ENCODE measurements at regions of chr11 and their contacts with region 1.

Region 1: GRCh38 chr11:4496557-4497275 is 14.3 kb downstream of the OR52K1 start:
- DNase-seq: no peak
- H3K4me3 ChIP-seq: no peak overlapping the region
- H3K27ac ChIP-seq: no peak overlapping the region
- H3K4me1 ChIP-seq: no peaks in the 10 kb centered on the region
- H3K27me3 ChIP-seq: no peaks in the 10 kb centered on the region
- CTCF ChIP-seq: no peak

Region 2: DNA sequence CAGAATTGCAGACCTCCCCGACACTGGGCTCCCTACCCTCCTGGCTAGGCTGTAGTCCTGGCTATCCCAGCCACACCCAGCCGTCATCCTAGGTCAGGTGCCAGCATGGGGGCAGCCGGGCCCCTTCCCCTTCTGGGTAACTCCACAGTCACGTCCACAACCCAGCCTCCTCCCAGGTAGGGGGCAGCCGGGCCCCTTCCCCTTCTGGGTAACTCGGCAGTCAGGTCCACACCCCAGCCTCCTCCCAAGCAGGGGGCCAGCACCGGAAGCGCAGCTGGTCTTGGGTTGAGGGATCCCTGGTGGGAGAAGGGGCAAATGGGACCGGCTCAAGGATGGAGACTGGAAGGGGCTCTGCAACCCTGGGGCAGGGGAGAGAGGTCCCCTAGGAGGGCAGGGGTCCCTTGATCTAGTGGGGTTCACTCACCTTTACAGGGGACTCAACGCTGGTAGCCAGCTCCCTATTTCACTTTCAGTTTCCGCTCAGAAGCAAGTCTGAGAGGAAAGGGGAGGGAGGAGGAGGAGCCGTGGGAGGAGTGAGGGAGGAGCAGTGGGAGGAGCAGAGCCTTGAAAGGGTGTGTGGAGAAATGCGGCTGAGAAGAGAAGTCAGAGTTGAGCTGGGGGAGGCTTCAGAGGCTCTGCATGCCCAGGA is 103.4 kb before region 1 on chr11 and contains the start of gene TRIM21:
- intact Hi-C with region 1: loop called (anchors 10 kb)
- DNase-seq: peak; percentile 92
- H3K4me3 ChIP-seq: peak within 1 kb of the TSS; percentile 92
- H3K27ac ChIP-seq: peak within 1 kb of the TSS; percentile 87
- H3K4me1 ChIP-seq: no peaks in the 10 kb centered on the region
- H3K27me3 ChIP-seq: no peaks in the 10 kb centered on the region
- CTCF ChIP-seq: no peak
- total RNA-seq, gene TRIM21: 23.1 to 25.8 TPM

Region 3: DNA sequence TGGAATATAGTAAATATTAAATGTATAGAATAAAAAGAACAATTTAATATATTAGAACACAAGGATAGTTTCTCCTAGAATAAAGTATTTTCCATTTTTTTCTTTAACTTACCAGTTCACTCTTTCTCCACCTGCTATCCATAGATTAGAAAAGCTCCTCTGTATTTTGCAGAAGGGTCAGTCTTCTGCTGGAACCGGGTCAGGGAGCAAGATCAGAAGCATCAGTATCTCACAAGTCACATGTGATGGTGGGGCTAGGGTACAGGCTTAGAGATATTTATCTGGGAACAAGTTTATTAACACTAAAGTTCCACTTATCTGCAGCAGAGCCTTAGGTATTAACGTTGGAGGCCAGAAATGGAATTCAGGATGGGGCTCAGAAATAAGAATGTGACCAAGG is 675.1 kb after region 1 on chr11:
- intact Hi-C with region 1: no loop called
- DNase-seq: no peak
- H3K4me3 ChIP-seq: no peak overlapping the region
- H3K27ac ChIP-seq: no peak overlapping the region
- H3K4me1 ChIP-seq: no peaks in the 10 kb centered on the region
- H3K27me3 ChIP-seq: no peaks in the 10 kb centered on the region
- CTCF ChIP-seq: no peak